Activated CD8-positive, alpha-beta T cell treated with anti-CD3 and anti-CD28 coated beads, Interleukin-2, amount 10 ng/mL, durations not matched to agents 7 days and 5 days (primary cell): ENCODE measurements at regions of chr2 and their contacts with region 1.

Region 1: GRCh38 chr2:96174251-96175144 is 29.3 kb upstream of the DUSP2 start:
- DNase-seq: peak; percentile 88
- ATAC-seq: peak; percentile 98
- H3K4me3 Mint-ChIP-seq: no peak overlapping the region
- H3K27ac Mint-ChIP-seq: no peak overlapping the region
- H3K4me1 Mint-ChIP-seq: peaks cover 6% of the 10 kb centered on the region
- H3K27me3 Mint-ChIP-seq: peaks cover 7% of the 10 kb centered on the region

Region 2: GRCh38 chr2:96116879-96117697 is 57.4 kb before region 1 on chr2:
- CTCF ChIA-PET with region 1: interaction called, 30 read pairs
- POLR2A ChIA-PET with region 1: interaction called, 3 read pairs
- DNase-seq: peak; percentile 64
- ATAC-seq: peak; percentile 88
- H3K4me3 Mint-ChIP-seq: peak overlapping the region; percentile 40
- H3K27ac Mint-ChIP-seq: no peak overlapping the region
- H3K4me1 Mint-ChIP-seq: peaks cover 30% of the 10 kb centered on the region
- H3K27me3 Mint-ChIP-seq: peaks cover 33% of the 10 kb centered on the region

Region 3: GRCh38 chr2:96138179-96139145 is 36.0 kb before region 1 on chr2 and contains the start of gene ASTL:
- CTCF ChIA-PET with region 1: interaction called, 674 read pairs
- POLR2A ChIA-PET with region 1: interaction called, 30 read pairs
- DNase-seq: peak; percentile 76
- ATAC-seq: peak; percentile 48
- H3K4me3 Mint-ChIP-seq: no peak within 1 kb of the TSS
- H3K27ac Mint-ChIP-seq: no peak within 1 kb of the TSS
- H3K4me1 Mint-ChIP-seq: peaks cover 21% of the 10 kb centered on the region
- H3K27me3 Mint-ChIP-seq: no peaks in the 10 kb centered on the region
- total RNA-seq, gene ASTL: 0.34 TPM in 1 of 2 experiments, not detected in the other

Region 4: GRCh38 chr2:96157651-96158553 is 16.6 kb before region 1 on chr2:
- CTCF ChIA-PET with region 1: interaction called, 674 read pairs
- POLR2A ChIA-PET with region 1: no interaction called
- DNase-seq: peak; percentile 76
- ATAC-seq: peak; percentile 76
- H3K4me3 Mint-ChIP-seq: peak overlapping the region; percentile 47
- H3K27ac Mint-ChIP-seq: peak overlapping the region; percentile 77
- H3K4me1 Mint-ChIP-seq: peaks cover 66% of the 10 kb centered on the region
- H3K27me3 Mint-ChIP-seq: no peaks in the 10 kb centered on the region

Region 5: DNA sequence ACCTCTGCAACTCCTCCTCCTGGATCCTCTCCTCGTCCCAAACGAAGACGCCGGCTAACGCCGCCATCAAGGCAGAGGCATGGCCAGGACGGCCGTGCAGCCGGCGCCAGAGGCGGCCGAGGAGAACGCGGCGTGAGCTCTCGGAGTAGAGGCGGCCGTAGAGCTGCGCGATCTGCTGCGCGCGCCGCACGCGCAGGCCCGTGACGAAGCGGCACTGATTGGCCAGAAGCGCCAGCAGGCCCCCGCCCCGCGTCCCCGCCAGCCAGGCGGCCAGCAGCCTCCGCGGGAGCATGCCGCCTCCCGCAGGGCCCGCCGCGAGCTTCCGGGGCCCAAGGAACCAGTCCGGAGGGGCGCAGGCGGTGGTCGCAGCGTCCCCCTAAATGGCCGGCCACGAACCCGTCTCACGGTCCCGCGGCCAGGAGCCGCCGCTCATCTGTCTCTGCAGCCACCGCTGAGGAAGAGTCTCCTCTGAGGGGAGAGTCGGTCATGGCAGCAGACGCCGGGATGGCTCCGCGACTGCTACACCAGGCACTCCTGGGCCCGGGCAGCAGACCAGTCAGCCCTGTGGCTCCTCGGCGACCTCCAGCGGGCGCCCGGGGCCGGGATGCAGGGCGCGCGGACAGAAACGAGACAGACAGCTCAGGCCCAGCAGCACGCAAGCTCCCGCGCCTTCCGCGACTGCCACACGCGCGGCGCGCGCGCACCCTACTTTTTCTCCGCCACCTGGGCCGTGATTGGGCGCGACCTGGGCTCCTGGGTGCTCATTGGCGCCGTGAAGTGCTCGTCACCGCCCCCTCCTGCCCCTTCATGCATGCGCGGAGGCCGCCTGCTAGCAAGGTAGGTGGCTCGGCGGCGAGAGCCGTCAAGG is 33.9 kb after region 1 on chr2 and contains the start of gene STARD7:
- CTCF ChIA-PET with region 1: interaction called, 24 read pairs
- POLR2A ChIA-PET with region 1: interaction called, 3 read pairs
- DNase-seq: peak; percentile 98
- ATAC-seq: peak; percentile 92
- H3K4me3 Mint-ChIP-seq: peak within 1 kb of the TSS; percentile 87
- H3K27ac Mint-ChIP-seq: peak within 1 kb of the TSS; percentile 86
- H3K4me1 Mint-ChIP-seq: peaks cover 55% of the 10 kb centered on the region
- H3K27me3 Mint-ChIP-seq: no peaks in the 10 kb centered on the region
- total RNA-seq, gene STARD7: 139 to 143 TPM

Region 6: GRCh38 chr2:96320728-96321622 is 146.5 kb after region 1 on chr2:
- CTCF ChIA-PET with region 1: no interaction called
- POLR2A ChIA-PET with region 1: no interaction called
- DNase-seq: no peak
- ATAC-seq: peak; percentile 29
- H3K4me3 Mint-ChIP-seq: peak overlapping the region; percentile 78
- H3K27ac Mint-ChIP-seq: peak overlapping the region; percentile 89
- H3K4me1 Mint-ChIP-seq: peaks cover 61% of the 10 kb centered on the region
- H3K27me3 Mint-ChIP-seq: no peaks in the 10 kb centered on the region

Region 7: DNA sequence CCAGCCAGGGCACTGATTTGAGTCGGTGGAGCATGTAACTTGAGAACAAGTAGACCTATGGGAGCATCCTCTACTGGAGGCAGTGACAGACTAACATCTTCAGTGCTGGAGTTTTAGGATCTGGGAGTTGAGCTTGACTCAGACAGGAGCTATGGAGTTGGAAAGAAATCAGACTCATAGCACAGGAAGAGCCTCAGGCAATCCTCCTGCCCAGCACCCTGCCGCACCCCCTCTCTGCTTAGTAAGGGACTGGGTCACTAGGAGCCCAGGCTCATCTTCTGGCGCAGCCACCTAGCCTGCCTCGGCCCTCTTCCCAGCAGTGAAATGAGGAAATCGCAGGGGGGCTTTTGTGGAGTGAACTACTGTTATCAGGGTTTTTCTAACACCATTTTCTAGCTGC is 365.6 kb after region 1 on chr2:
- CTCF ChIA-PET with region 1: no interaction called
- POLR2A ChIA-PET with region 1: no interaction called
- DNase-seq: no peak
- ATAC-seq: no peak
- H3K4me3 Mint-ChIP-seq: peak overlapping the region; percentile 83
- H3K27ac Mint-ChIP-seq: peak overlapping the region; percentile 82
- H3K4me1 Mint-ChIP-seq: peaks cover 65% of the 10 kb centered on the region
- H3K27me3 Mint-ChIP-seq: no peaks in the 10 kb centered on the region

Region 8: GRCh38 chr2:96638144-96639121 is 463.9 kb after region 1 on chr2 and contains the start of gene KANSL3:
- CTCF ChIA-PET with region 1: no interaction called
- POLR2A ChIA-PET with region 1: no interaction called
- DNase-seq: peak; percentile 91
- ATAC-seq: peak; percentile 81
- H3K4me3 Mint-ChIP-seq: peak within 1 kb of the TSS; percentile 80
- H3K27ac Mint-ChIP-seq: peak within 1 kb of the TSS; percentile 96
- H3K4me1 Mint-ChIP-seq: peaks cover 33% of the 10 kb centered on the region
- H3K27me3 Mint-ChIP-seq: peaks cover 6% of the 10 kb centered on the region
- total RNA-seq, gene KANSL3: 60.8 to 64.4 TPM